Sigmoid colon (tissue), 7 donors: ENCODE measurements at regions of chr18 and their contacts with region 1.

Region 1: DNA sequence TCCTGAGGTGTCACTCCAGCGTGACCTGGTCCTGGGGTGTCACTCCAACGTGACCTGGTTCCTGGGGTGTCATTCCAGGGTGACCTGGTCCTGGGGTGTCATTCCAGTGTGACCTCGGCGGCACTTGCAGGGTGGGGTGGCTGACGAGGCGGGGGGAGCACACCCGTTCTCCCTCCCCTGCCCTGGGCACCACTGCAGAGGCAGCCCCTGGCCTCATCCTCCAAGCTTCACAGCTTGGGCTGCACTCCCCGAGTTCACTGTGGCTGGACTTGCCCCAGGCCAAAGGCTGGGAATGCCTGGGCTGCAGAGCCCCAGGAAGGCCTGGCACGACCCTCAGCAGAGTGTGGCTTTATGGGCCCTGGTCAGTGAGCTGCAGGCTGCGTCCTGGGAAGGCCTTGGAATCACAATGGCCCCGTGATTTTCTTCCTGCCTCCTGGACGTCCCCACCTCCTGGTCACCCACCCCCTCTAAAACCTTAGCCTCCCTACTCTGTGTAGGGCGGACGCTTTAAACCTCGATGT is 88.3 kb downstream of the NFATC1 start:
- DNase-seq: peak; percentile 56
- H3K4me3 ChIP-seq: no peak overlapping the region
- H3K27ac ChIP-seq: peak overlapping the region in 1 of 4 donors; percentile 71
- H3K4me1 ChIP-seq: peaks cover 0 to 27% (median 25%) of the 10 kb centered on the region in 4 donors
- H3K27me3 ChIP-seq: no peaks in the 10 kb centered on the region
- CTCF ChIP-seq: no peak
- EP300 ChIP-seq: no peak
- POLR2A ChIP-seq: no peak

Region 2: GRCh38 chr18:79378542-79379250 is 105.3 kb before region 1 on chr18:
- intact Hi-C with region 1: no loop called
- DNase-seq: peak; percentile 90
- H3K4me3 ChIP-seq: no peak overlapping the region
- H3K27ac ChIP-seq: no peak overlapping the region
- H3K4me1 ChIP-seq: peaks cover 0 to 8% (median 4%) of the 10 kb centered on the region in 4 donors
- H3K27me3 ChIP-seq: no peaks in the 10 kb centered on the region
- CTCF ChIP-seq: peak; percentile 94 to 95 (median 94)
- EP300 ChIP-seq: no peak
- POLR2A ChIP-seq: no peak

Region 3: GRCh38 chr18:79418236-79418635 is 65.8 kb before region 1 on chr18:
- intact Hi-C with region 1: loop called (anchors 2 kb)
- DNase-seq: no peak
- H3K4me3 ChIP-seq: no peak overlapping the region
- H3K27ac ChIP-seq: no peak overlapping the region
- H3K4me1 ChIP-seq: peaks cover 0 to 27% (median 17%) of the 10 kb centered on the region in 4 donors
- H3K27me3 ChIP-seq: no peaks in the 10 kb centered on the region
- CTCF ChIP-seq: no peak
- EP300 ChIP-seq: no peak
- POLR2A ChIP-seq: no peak

Region 4: DNA sequence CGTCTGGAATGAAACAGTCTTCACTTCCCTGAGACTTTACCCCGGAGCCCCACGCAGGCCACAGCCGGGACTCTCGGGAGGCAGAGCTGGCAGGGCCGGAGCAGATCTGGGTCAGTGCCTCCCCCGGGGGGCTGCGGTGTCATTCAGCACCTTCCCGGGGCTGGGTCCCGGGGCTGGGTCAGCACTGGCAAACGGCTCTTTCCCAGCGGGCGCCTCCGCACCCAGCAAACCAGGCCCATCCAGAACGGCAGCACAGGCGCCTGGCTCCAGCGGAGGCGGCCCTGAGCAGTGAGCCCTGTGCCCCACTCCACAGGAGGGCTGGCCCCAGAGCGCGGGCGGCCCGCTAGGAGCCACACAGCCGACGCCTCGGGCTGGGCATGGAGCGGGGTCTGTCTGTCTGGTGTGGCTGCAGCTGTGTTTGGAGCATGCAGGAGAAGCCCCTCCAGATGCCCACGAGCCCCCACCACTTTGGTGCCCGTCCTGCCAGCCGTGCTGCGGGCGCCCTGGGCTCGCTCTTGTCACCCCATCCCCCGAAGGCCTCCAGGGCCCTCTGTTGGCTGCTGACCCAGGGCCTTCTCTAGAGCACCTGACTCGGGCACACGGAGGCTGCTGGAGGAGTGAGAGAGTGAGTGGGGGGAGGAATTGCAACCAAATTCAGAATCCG is 63.5 kb after region 1 on chr18:
- intact Hi-C with region 1: no loop called
- DNase-seq: no peak
- H3K4me3 ChIP-seq: no peak overlapping the region
- H3K27ac ChIP-seq: no peak overlapping the region
- H3K4me1 ChIP-seq: no peaks in the 10 kb centered on the region
- H3K27me3 ChIP-seq: peaks cover 0 to 5% (median 0%) of the 10 kb centered on the region in 3 donors
- CTCF ChIP-seq: no peak
- EP300 ChIP-seq: no peak
- POLR2A ChIP-seq: no peak

Region 5: GRCh38 chr18:79672490-79673276 is 188.7 kb after region 1 on chr18:
- intact Hi-C with region 1: no loop called
- DNase-seq: no peak
- H3K4me3 ChIP-seq: no peak overlapping the region
- H3K27ac ChIP-seq: no peak overlapping the region
- H3K4me1 ChIP-seq: peaks cover 0 to 11% (median 8%) of the 10 kb centered on the region in 4 donors
- H3K27me3 ChIP-seq: no peaks in the 10 kb centered on the region
- CTCF ChIP-seq: no peak
- EP300 ChIP-seq: no peak
- POLR2A ChIP-seq: no peak

Region 6: GRCh38 chr18:79799619-79800370 is 315.8 kb after region 1 on chr18:
- intact Hi-C with region 1: no loop called
- DNase-seq: peak; percentile 55
- H3K4me3 ChIP-seq: no peak overlapping the region
- H3K27ac ChIP-seq: no peak overlapping the region
- H3K4me1 ChIP-seq: peaks cover 0 to 20% (median 19%) of the 10 kb centered on the region in 4 donors
- H3K27me3 ChIP-seq: peaks cover 12 to 64% (median 34%) of the 10 kb centered on the region in 3 donors
- CTCF ChIP-seq: no peak
- EP300 ChIP-seq: no peak
- POLR2A ChIP-seq: no peak